ENCODE measurements at regions of chr14 and their contacts with region 1.

Region 1: GRCh38 chr14:76710056-76711010 is 50.9 kb upstream of the VASH1 start:
- DNase-seq: no peak
- ATAC-seq: peak; percentile 56
- H3K4me3 Mint-ChIP-seq: no peak overlapping the region
- H3K27ac Mint-ChIP-seq: no peak overlapping the region
- H3K4me1 Mint-ChIP-seq: peaks cover 4% of the 10 kb centered on the region; the same call in 1 of the 2 replicates
- H3K27me3 Mint-ChIP-seq: no peaks in the 10 kb centered on the region
- CTCF ChIP-seq: peak; percentile 65

Region 2: GRCh38 chr14:76391981-76392690 is 318.2 kb before region 1 on chr14:
- CTCF ChIA-PET with region 1: no interaction called
- POLR2A ChIA-PET with region 1: no interaction called
- DNase-seq: no peak
- ATAC-seq: no peak
- H3K4me3 Mint-ChIP-seq: no peak overlapping the region
- H3K27ac Mint-ChIP-seq: no peak overlapping the region
- H3K4me1 Mint-ChIP-seq: 0 out of 2 replicates have a peak, but pooled peaks cover 2% of the 10 kb centered on the region
- H3K27me3 Mint-ChIP-seq: no peaks in the 10 kb centered on the region
- CTCF ChIP-seq: no peak

Region 3: GRCh38 chr14:76516884-76517283 is 193.4 kb before region 1 on chr14:
- CTCF ChIA-PET with region 1: no interaction called
- POLR2A ChIA-PET with region 1: no interaction called
- DNase-seq: no peak
- ATAC-seq: no peak
- H3K4me3 Mint-ChIP-seq: no peak overlapping the region
- H3K27ac Mint-ChIP-seq: no peak overlapping the region
- H3K4me1 Mint-ChIP-seq: no peaks in the 10 kb centered on the region
- H3K27me3 Mint-ChIP-seq: no peaks in the 10 kb centered on the region; the same call in 1 of the 2 replicates
- CTCF ChIP-seq: no peak

Region 4: DNA sequence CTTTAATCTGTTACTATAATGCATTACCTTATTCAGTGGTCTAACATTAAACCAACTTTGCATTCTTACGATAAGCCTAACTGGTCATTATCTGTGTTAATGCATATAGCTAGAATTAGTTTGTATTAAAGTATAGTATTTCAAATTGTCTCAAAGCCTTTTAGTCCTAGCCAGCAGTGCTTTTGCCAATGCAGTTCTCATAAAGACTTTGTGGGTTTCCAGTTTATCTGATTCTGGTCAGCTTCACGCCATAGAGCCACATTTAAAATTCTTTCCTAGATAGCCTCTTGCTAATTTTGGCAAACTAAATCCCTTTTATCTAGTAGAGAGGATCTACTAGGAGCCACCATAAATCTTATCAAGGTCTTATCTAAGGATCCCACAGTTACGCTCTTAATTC is 28.0 kb before region 1 on chr14:
- CTCF ChIA-PET with region 1: no interaction called
- POLR2A ChIA-PET with region 1: no interaction called
- DNase-seq: no peak
- ATAC-seq: no peak
- H3K4me3 Mint-ChIP-seq: no peak overlapping the region
- H3K27ac Mint-ChIP-seq: no peak overlapping the region
- H3K4me1 Mint-ChIP-seq: peaks cover 3% of the 10 kb centered on the region
- H3K27me3 Mint-ChIP-seq: 0 out of 2 replicates have a peak, but pooled peaks cover 4% of the 10 kb centered on the region
- CTCF ChIP-seq: no peak

Region 5: DNA sequence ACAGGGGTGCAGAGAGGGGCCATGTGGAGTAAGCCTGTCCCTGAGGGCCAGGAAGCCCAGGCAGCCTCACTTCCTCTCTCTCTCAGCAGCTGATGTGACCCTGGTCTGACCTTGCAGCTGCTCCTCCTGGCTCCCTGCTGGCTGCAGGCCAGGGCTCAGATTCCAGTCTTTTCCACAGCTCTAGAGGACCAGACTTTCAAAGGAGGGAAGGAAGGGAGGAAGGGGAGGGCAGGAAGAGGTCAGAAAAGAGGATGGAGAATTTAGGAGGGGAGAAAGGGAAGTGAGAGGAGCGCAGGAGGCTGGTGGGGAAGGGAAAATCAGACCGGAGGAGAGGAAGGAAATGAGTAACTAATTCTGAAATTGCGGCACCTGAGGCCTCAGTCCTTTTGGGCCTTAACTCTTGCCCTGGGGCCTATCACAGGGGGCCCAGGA is 10.1 kb after region 1 on chr14:
- CTCF ChIA-PET with region 1: interaction called, 24 read pairs
- POLR2A ChIA-PET with region 1: no interaction called
- DNase-seq: peak; percentile 51
- ATAC-seq: peak; percentile 97
- H3K4me3 Mint-ChIP-seq: no peak overlapping the region
- H3K27ac Mint-ChIP-seq: no peak overlapping the region
- H3K4me1 Mint-ChIP-seq: peaks cover 21% of the 10 kb centered on the region
- H3K27me3 Mint-ChIP-seq: peaks cover 2% of the 10 kb centered on the region; the same call in 1 of the 2 replicates
- CTCF ChIP-seq: no peak

Region 6: GRCh38 chr14:76752744-76753143 is 42.4 kb after region 1 on chr14:
- CTCF ChIA-PET with region 1: interaction called, 10 read pairs
- POLR2A ChIA-PET with region 1: no interaction called
- DNase-seq: no peak
- ATAC-seq: no peak
- H3K4me3 Mint-ChIP-seq: no peak overlapping the region
- H3K27ac Mint-ChIP-seq: no peak overlapping the region
- H3K4me1 Mint-ChIP-seq: no peaks in the 10 kb centered on the region
- H3K27me3 Mint-ChIP-seq: peaks cover 19% of the 10 kb centered on the region
- CTCF ChIP-seq: no peak

Region 7: DNA sequence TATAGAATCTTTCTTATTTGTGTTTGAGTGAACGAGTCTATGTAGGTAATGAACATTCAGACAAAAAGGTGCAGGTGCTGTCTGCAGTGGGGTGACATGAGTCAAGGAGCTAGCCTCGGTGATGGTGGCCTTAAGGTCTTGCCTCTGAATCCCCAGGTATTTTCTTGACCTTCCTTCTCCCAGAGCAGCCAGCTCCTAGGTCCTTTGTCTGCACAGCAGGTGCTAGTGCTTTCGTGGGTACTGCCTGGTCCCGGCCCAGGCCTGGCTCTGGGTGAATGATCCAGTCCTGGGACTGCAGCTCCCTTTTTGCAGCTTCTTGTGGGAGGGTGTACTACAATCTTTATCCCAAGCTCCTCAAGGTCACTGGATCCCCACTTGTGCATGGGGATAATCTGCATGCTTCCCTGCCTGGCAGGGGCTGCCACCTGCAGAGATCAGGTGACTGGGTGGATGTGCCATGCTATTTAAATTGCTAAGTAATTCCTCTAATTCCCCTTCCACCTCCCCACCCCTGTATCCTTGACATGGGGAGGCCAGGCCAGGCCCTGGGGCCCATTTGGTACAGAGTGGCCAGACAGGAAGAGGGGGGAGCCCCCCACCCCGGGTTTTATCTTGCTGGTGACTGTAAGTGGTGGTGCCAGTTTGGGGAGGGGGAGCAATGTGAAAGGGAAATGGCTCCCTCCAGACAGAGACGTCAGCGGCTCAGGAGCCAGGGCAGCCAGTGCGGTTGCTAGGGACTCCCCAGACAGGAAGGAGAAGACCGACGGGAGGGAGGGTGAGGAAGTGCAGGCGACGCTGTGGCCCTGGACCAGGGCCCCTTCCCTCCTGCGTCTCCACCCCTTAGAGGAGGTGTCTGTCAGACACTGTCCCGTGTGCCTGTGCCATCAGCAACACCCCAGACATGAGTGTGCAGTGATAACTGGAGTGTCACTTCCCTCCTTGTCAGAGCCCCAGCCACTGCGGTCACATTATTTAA is 57.6 kb after region 1 on chr14:
- CTCF ChIA-PET with region 1: interaction called, 24 read pairs
- POLR2A ChIA-PET with region 1: no interaction called
- DNase-seq: peak; percentile 52
- ATAC-seq: peak; percentile 62
- H3K4me3 Mint-ChIP-seq: peak overlapping the region; percentile 44
- H3K27ac Mint-ChIP-seq: no peak overlapping the region
- H3K4me1 Mint-ChIP-seq: peaks cover 28% of the 10 kb centered on the region
- H3K27me3 Mint-ChIP-seq: peaks cover 32% of the 10 kb centered on the region
- CTCF ChIP-seq: no peak

Region 8: GRCh38 chr14:76773188-76773885 is 63.0 kb after region 1 on chr14:
- CTCF ChIA-PET with region 1: interaction called, 24 read pairs
- POLR2A ChIA-PET with region 1: no interaction called
- DNase-seq: no peak
- ATAC-seq: peak; percentile 5; the same call in 1 of the 2 replicates
- H3K4me3 Mint-ChIP-seq: no peak overlapping the region
- H3K27ac Mint-ChIP-seq: no peak overlapping the region
- H3K4me1 Mint-ChIP-seq: peaks cover 23% of the 10 kb centered on the region
- H3K27me3 Mint-ChIP-seq: no peaks in the 10 kb centered on the region; the same call in 1 of the 2 replicates
- CTCF ChIP-seq: no peak

Region 9: GRCh38 chr14:76812211-76813044 is 102.1 kb after region 1 on chr14 and contains the start of gene ANGEL1:
- CTCF ChIA-PET with region 1: interaction called, 22 read pairs
- POLR2A ChIA-PET with region 1: no interaction called
- DNase-seq: peak; percentile 96
- ATAC-seq: peak; percentile 94
- H3K4me3 Mint-ChIP-seq: peak within 1 kb of the TSS; percentile 92
- H3K27ac Mint-ChIP-seq: peak within 1 kb of the TSS; percentile 55
- H3K4me1 Mint-ChIP-seq: peaks cover 16% of the 10 kb centered on the region
- H3K27me3 Mint-ChIP-seq: peaks cover 3% of the 10 kb centered on the region; the same call in 1 of the 2 replicates
- CTCF ChIP-seq: no peak
- total RNA-seq, gene ANGEL1: 25.7 to 29.7 TPM (median 25.8 TPM) in 3 replicates